Vagina (tissue), 2 donors: ENCODE measurements at regions of chr2 and their contacts with region 1.

Region 1: DNA sequence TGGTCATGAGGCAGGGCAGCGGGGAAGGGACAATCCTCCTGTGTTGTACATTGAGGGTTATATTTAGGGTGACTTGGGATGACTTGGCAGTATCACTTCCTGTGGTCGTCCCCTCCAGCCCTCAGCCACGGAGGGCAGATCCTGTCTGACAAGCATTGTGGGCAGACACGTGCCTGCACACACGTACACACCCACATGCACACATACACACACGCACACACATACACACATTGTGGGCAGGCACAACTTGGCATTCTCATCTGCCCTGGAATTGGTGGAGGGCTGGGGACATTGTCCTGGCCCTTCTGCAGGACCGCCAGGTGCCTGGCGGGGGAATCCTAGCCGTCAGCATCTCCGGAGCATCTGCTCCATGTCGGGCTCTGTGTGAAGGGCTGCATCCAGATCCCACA is 47.6 kb downstream of the ODC1 start:
- DNase-seq: no peak
- H3K4me3 ChIP-seq: no peak overlapping the region
- H3K27ac ChIP-seq: peak overlapping the region; percentile 20
- H3K4me1 ChIP-seq: peaks cover 43% of the 10 kb centered on the region
- H3K27me3 ChIP-seq: no peaks in the 10 kb centered on the region
- CTCF ChIP-seq: no peak
- POLR2A ChIP-seq: no peak

Region 2: GRCh38 chr2:10302479-10303180 is 97.9 kb before region 1 on chr2 and contains the start of gene HPCAL1:
- intact Hi-C with region 1: loop called (anchors 5 kb)
- DNase-seq: no peak
- H3K4me3 ChIP-seq: peak within 1 kb of the TSS; percentile 75 to 86
- H3K27ac ChIP-seq: peak within 1 kb of the TSS; percentile 77
- H3K4me1 ChIP-seq: peaks cover 43% of the 10 kb centered on the region
- H3K27me3 ChIP-seq: no peaks in the 10 kb centered on the region
- CTCF ChIP-seq: peak in 2 of 3 experiments; percentile 37 to 78
- POLR2A ChIP-seq: peak in 1 of 2 donors; percentile 96
- total RNA-seq, gene HPCAL1: 43.7 TPM